Activated CD4-positive, alpha-beta T cell treated with anti-CD3 and anti-CD28 coated beads for 36 hours (primary cell): ENCODE measurements at regions of chr18 and their contacts with region 1.

Region 1: GRCh38 chr18:74551936-74552555 is 17.7 kb downstream of the CNDP1 start:
- DNase-seq: peak; percentile 88
- ATAC-seq: peak; percentile 100
- H3K4me3 Mint-ChIP-seq: no peak overlapping the region
- H3K27ac Mint-ChIP-seq: no peak overlapping the region
- H3K4me1 Mint-ChIP-seq: no peaks in the 10 kb centered on the region
- H3K27me3 Mint-ChIP-seq: peaks cover 5% of the 10 kb centered on the region

Region 2: GRCh38 chr18:73535189-73535588 is 1016.9 kb before region 1 on chr18:
- CTCF ChIA-PET with region 1: no interaction called
- POLR2A ChIA-PET with region 1: no interaction called
- intact Hi-C with region 1: no loop called
- DNase-seq: no peak
- ATAC-seq: no peak
- H3K4me3 Mint-ChIP-seq: no peak overlapping the region
- H3K27ac Mint-ChIP-seq: no peak overlapping the region
- H3K4me1 Mint-ChIP-seq: no peaks in the 10 kb centered on the region
- H3K27me3 Mint-ChIP-seq: no peaks in the 10 kb centered on the region

Region 3: DNA sequence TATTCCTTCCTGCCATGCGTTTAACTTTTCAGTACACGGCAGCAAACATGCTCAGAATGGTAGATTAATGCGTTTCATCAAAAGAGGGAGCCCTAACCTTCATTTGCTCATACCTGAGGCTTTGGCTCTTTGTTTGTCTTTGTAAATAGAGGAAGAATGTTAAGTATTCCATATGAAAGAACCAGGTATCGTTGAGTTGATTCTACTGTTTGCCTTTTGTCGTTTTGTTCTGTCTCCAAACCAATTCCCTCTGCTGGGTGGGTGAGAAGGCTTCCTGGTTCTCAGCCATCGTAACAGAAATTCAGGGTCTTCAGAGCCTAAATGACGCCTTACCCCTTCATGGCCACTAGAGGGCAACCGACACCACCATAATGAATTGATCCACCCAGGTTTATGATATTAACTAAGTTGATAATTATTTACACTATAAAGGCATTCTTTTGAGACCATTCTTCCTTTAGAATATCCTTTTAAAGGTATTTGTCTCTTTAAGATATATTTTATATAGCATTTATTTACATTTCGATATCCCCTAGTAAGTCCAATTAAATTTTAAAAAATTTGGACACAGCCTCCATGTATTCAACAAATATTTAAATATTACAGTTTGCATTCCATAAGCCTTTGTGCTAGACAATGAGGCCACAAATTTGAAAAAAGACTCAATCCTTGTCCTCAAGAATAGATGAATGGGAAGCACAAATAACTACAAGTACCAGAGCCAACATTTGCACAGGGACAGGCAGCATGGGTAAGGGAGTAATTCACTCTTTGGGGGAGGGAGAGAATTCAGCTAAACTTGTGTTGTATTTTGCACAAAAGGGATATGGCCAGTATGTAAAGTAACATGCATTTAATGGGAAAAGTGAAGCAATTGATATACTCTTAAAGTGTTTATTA is 355.6 kb before region 1 on chr18:
- CTCF ChIA-PET with region 1: interaction called, 22 read pairs
- POLR2A ChIA-PET with region 1: no interaction called
- intact Hi-C with region 1: loop called (anchors 1 kb)
- DNase-seq: peak; percentile 57
- ATAC-seq: peak; percentile 90
- H3K4me3 Mint-ChIP-seq: peak overlapping the region; percentile 32
- H3K27ac Mint-ChIP-seq: no peak overlapping the region
- H3K4me1 Mint-ChIP-seq: peaks cover 4% of the 10 kb centered on the region
- H3K27me3 Mint-ChIP-seq: peaks cover 3% of the 10 kb centered on the region

Region 4: GRCh38 chr18:74353169-74353775 is 198.8 kb before region 1 on chr18:
- CTCF ChIA-PET with region 1: interaction called, 27 read pairs
- POLR2A ChIA-PET with region 1: no interaction called
- intact Hi-C with region 1: loop called (anchors 1 kb)
- DNase-seq: peak; percentile 66
- ATAC-seq: peak; percentile 81
- H3K4me3 Mint-ChIP-seq: no peak overlapping the region
- H3K27ac Mint-ChIP-seq: no peak overlapping the region
- H3K4me1 Mint-ChIP-seq: peaks cover 7% of the 10 kb centered on the region
- H3K27me3 Mint-ChIP-seq: no peaks in the 10 kb centered on the region

Region 5: GRCh38 chr18:74563999-74564398 is 12.0 kb after region 1 on chr18:
- CTCF ChIA-PET with region 1: interaction called, 11 read pairs
- POLR2A ChIA-PET with region 1: no interaction called
- intact Hi-C with region 1: no loop called
- DNase-seq: no peak
- ATAC-seq: no peak
- H3K4me3 Mint-ChIP-seq: no peak overlapping the region
- H3K27ac Mint-ChIP-seq: no peak overlapping the region
- H3K4me1 Mint-ChIP-seq: no peaks in the 10 kb centered on the region
- H3K27me3 Mint-ChIP-seq: peaks cover 11% of the 10 kb centered on the region

Region 6: GRCh38 chr18:74942319-74942910 is 390.4 kb after region 1 on chr18:
- CTCF ChIA-PET with region 1: no interaction called
- POLR2A ChIA-PET with region 1: no interaction called
- intact Hi-C with region 1: no loop called
- DNase-seq: peak; percentile 62
- ATAC-seq: peak; percentile 90
- H3K4me3 Mint-ChIP-seq: peak overlapping the region; percentile 41
- H3K27ac Mint-ChIP-seq: peak overlapping the region; percentile 55
- H3K4me1 Mint-ChIP-seq: peaks cover 21% of the 10 kb centered on the region
- H3K27me3 Mint-ChIP-seq: no peaks in the 10 kb centered on the region